ENCODE measurements at regions of chr15 and their contacts with region 1.

Region 1: GRCh38 chr15:85730001-85730820 is 64.5 kb downstream of the KLHL25 start:
- DNase-seq: peak in 4 of 9 experiments; percentile 30 to 80 (median 64)
- ATAC-seq: peak; percentile 93
- H3K4me3 ChIP-seq: no peak overlapping the region
- H3K4me3 Mint-ChIP-seq: no peak overlapping the region
- H3K27ac ChIP-seq: no peak overlapping the region
- H3K27ac Mint-ChIP-seq: peak overlapping the region; percentile 34
- H3K4me1 ChIP-seq: no peaks in the 10 kb centered on the region
- H3K4me1 Mint-ChIP-seq: peaks cover 8% of the 10 kb centered on the region
- H3K27me3 ChIP-seq: no peaks in the 10 kb centered on the region
- H3K27me3 Mint-ChIP-seq: no peaks in the 10 kb centered on the region
- CTCF ChIP-seq: peak; percentile 81

Region 2: DNA sequence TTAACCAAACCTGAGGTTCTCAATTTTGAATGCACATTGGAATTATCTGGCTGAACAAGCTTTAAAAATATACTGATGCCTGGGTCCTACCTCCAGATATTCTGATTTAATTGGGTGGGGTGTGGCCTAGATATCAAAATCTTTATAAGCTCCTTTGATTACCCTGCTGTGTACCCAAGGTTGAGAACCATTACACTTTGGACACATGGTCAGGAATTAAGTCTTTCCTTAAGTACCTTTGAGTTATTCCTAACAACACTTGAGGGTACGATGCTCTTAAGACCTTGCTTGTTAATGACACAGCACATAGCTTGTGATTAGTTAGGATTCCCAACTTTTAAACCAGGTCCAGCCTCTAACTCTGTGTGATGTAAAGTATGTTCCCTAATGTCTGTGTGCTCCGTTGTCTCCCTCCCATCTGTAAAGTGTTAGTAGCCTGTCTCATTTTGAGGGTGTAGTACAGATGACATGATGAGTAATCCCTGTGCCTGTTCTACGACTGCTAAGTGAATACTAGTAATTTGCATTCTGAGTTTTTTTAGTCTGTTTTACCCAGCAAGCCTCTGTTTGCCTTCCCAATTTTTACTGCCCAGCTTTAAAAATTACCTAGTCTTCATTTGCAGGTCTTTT is 90.3 kb before region 1 on chr15:
- CTCF ChIA-PET with region 1: no interaction called
- POLR2A ChIA-PET with region 1: no interaction called
- intact Hi-C with region 1: no loop called
- DNase-seq: no peak
- ATAC-seq: no peak
- H3K4me3 ChIP-seq: no peak overlapping the region
- H3K4me3 Mint-ChIP-seq: no peak overlapping the region
- H3K27ac ChIP-seq: no peak overlapping the region
- H3K27ac Mint-ChIP-seq: no peak overlapping the region
- H3K4me1 ChIP-seq: peaks cover 2% of the 10 kb centered on the region
- H3K4me1 Mint-ChIP-seq: peaks cover 24% of the 10 kb centered on the region
- H3K27me3 ChIP-seq: no peaks in the 10 kb centered on the region
- H3K27me3 Mint-ChIP-seq: no peaks in the 10 kb centered on the region
- CTCF ChIP-seq: no peak

Region 3: DNA sequence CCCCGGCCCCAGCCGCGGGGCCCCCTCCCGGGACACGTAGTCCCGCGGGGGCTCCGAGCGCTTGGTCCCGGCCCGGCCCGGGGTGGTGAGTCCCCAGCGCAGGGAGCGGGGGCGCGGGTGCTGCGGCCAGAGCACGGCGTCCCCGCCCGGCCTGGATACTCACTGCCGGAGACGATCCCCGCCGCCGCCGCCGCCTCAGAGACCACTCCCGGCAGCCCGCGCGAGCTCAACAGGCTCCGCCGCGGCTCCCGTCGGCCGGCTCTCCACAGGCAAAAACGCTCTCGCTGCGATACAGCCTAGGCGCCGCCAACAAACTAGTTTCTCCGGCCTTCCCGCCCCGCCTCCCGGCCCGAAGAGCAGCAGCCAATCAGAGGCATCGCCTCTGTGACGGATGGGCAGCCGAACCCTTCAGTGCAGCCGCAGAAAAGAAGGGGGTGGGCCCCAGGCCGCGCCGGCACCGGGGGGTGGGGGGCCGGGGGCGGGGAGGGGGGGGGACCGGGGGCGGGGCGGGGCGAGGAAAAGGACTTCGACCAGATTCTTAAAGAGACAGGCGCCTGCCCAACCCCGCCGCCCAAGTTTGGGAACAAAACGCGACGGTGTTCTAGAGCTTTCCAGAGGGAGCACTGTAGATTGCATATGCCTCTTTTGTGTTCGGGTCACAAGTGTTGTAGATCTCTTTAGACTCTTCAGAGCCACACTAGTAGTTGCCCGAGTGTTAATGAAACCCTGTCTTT is 64.6 kb after region 1 on chr15 and contains the start of gene KLHL25:
- CTCF ChIA-PET with region 1: interaction called, 5 read pairs
- POLR2A ChIA-PET with region 1: no interaction called
- intact Hi-C with region 1: loop called in 1 of 2 experiments (anchors 5 kb)
- DNase-seq: peak; percentile 84 to 97 (median 90)
- ATAC-seq: peak; percentile 98
- H3K4me3 ChIP-seq: peak within 1 kb of the TSS; percentile 62 to 86
- H3K4me3 Mint-ChIP-seq: peak within 1 kb of the TSS; percentile 93
- H3K27ac ChIP-seq: peak within 1 kb of the TSS; percentile 40 to 56
- H3K27ac Mint-ChIP-seq: peak within 1 kb of the TSS; percentile 89
- H3K4me1 ChIP-seq: peaks cover 28% of the 10 kb centered on the region
- H3K4me1 Mint-ChIP-seq: peaks cover 39% of the 10 kb centered on the region
- H3K27me3 ChIP-seq: no peaks in the 10 kb centered on the region
- H3K27me3 Mint-ChIP-seq: peaks cover 3% of the 10 kb centered on the region
- CTCF ChIP-seq: no peak
- total RNA-seq, gene KLHL25: 4.3 to 4.9 TPM

Region 4: GRCh38 chr15:85831415-85832113 is 101.4 kb after region 1 on chr15:
- CTCF ChIA-PET with region 1: interaction called, 159 read pairs
- POLR2A ChIA-PET with region 1: no interaction called
- intact Hi-C with region 1: loop called in 1 of 2 experiments (anchors 1 kb)
- DNase-seq: peak in 4 of 9 experiments; percentile 16 to 45 (median 26)
- ATAC-seq: no peak
- H3K4me3 ChIP-seq: no peak overlapping the region
- H3K4me3 Mint-ChIP-seq: no peak overlapping the region
- H3K27ac ChIP-seq: no peak overlapping the region
- H3K27ac Mint-ChIP-seq: no peak overlapping the region
- H3K4me1 ChIP-seq: no peaks in the 10 kb centered on the region
- H3K4me1 Mint-ChIP-seq: no peaks in the 10 kb centered on the region
- H3K27me3 ChIP-seq: no peaks in the 10 kb centered on the region
- H3K27me3 Mint-ChIP-seq: peaks cover 5% of the 10 kb centered on the region
- CTCF ChIP-seq: no peak